ENCODE measurements at regions of chr17 and their contacts with region 1.

Region 1: GRCh38 chr17:64975329-64976087 is 56.2 kb upstream of the LRRC37A3 start:
- DNase-seq: peak; percentile 100
- H3K4me3 Mint-ChIP-seq: peak overlapping the region; percentile 76
- H3K27ac Mint-ChIP-seq: peak overlapping the region; percentile 93
- H3K4me1 Mint-ChIP-seq: peaks cover 47% of the 10 kb centered on the region
- H3K27me3 Mint-ChIP-seq: no peaks in the 10 kb centered on the region

Region 2: DNA sequence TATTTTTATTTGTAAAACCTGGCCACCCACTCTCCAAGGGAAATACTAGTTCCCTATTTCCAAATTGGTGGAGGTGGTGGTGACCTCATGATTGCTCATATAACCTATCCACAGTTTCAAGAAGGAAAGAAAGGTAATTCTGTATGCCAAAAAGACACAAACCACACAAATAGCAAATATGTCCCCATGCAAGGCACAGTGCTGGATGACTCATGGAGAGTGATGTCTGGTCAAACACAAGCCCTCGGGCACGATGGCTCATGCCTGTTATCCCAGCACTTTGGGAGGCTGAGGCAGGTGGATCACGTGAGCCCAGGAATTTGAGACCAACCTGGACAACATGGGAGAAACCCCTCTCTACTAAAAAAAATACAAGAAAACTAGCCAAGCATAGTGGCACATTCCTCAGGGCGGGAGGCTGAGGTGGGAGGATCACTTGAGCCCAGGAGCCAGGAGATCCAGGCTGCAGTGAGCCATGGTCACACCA is 16.9 kb after region 1 on chr17:
- intact Hi-C with region 1: loop called (anchors 2 kb)
- DNase-seq: no peak
- H3K4me3 Mint-ChIP-seq: peak overlapping the region; percentile 9
- H3K27ac Mint-ChIP-seq: peak overlapping the region; percentile 70
- H3K4me1 Mint-ChIP-seq: peaks cover 32% of the 10 kb centered on the region
- H3K27me3 Mint-ChIP-seq: peaks cover 2% of the 10 kb centered on the region

Region 3: DNA sequence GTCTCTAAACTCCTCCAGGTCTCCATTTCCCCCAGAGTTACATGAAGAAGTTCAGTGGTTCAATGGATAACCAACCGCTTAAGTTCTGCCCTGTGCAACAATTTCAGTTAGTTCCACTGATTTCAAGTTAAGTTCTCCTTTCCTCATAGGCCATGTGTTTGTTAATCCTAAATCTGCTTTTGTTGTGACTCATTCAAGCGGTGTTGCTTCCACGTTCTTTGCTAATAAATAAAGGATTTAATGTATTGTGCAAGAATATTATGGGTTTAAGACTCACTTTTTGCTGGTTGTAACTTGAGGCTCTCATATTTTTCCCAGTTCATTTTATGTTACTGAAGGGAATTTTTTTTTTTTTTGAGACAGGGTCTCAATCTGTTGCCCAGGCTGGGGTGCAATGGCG is 44.8 kb after region 1 on chr17:
- intact Hi-C with region 1: no loop called
- DNase-seq: no peak
- H3K4me3 Mint-ChIP-seq: no peak overlapping the region
- H3K27ac Mint-ChIP-seq: no peak overlapping the region
- H3K4me1 Mint-ChIP-seq: peaks cover 48% of the 10 kb centered on the region
- H3K27me3 Mint-ChIP-seq: no peaks in the 10 kb centered on the region

Region 4: DNA sequence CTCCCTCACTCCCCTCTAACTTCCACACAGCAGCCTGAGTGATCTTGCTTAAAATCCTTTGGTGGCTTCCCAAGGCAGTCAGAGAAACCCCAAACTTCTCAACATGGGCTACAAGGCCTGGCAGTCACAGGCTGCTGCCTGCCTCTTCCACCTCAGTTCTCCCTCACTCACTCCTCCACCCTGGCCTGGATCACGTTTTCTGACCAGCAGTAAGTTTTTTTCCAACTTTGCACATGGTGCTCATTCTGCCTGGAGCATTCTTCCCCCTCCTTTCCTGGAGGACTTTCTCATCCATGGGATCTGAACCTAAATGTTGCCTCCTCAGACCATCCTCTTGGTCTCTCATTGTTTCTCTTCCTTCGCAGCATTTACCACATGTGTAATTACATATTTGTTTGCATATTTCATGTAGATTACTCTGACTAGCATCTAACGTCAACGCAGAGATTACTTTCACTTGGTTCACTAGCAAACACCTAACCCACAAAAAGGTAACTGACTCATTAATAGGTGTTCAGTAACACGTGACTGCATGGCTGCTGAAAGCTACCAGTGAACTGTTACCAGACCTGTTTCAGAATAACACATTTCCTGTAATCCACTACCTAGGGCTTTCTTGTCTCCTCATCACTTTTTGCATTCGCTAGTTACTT is 64.0 kb after region 1 on chr17:
- intact Hi-C with region 1: loop called (anchors 2 kb)
- DNase-seq: peak; percentile 85
- H3K4me3 Mint-ChIP-seq: peak overlapping the region; percentile 68
- H3K27ac Mint-ChIP-seq: peak overlapping the region; percentile 79
- H3K4me1 Mint-ChIP-seq: peaks cover 66% of the 10 kb centered on the region
- H3K27me3 Mint-ChIP-seq: no peaks in the 10 kb centered on the region

Region 5: GRCh38 chr17:65122836-65123756 is 147.6 kb after region 1 on chr17:
- intact Hi-C with region 1: loop called (anchors 2 kb)
- DNase-seq: peak; percentile 96
- H3K4me3 Mint-ChIP-seq: peak overlapping the region; percentile 86
- H3K27ac Mint-ChIP-seq: peak overlapping the region; percentile 97
- H3K4me1 Mint-ChIP-seq: peaks cover 22% of the 10 kb centered on the region
- H3K27me3 Mint-ChIP-seq: peaks cover 12% of the 10 kb centered on the region

Region 6: DNA sequence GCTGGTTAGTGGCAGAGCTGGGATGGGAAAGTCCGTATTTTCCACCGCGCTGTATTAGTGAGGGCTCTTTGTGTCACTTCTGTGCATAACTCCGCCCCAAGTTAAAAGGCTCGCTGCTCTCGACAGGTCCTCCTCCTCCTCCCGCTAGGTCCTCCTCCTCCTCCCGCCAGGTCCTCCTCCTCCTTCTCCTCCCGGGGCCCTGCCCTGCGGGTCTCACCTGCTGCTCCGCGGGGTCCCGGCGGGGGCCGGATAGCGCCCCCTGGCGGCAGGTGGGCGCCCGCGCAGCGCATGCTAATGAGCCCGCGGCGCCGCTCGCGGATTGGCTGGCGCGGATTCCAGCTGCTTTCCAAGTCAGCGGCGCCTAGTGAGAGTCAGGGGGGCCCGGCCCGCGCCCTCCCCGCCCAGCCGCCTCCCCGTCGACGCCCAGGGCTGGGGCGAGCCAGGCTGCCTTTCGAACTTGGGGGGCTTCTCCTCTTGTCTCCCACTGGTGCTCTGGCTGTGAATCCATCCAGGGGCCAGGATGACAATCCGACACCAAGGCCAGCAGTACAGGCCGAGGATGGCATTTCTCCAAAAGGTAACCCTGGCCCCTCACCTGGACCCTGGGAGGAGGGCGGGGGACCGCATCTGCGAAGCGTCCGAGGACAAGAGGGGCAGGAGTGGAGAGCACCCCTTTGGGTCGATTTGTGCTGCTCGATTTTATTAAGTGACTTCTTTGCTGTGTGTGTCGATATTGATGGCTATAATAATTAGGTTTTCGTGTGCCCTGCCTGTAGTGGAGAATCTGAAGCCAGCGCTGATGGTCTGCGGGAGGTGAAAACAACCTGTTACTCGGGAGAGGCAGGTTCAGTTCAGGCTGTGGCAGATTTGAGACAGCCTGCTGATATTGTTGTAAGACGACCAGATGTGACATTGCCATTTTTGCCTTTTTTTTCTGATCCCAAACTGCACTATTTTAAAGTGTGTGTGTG is 161.8 kb after region 1 on chr17 and contains the start of gene RGS9:
- intact Hi-C with region 1: no loop called
- DNase-seq: peak; percentile 97
- H3K4me3 Mint-ChIP-seq: peak within 1 kb of the TSS; percentile 80
- H3K27ac Mint-ChIP-seq: peak within 1 kb of the TSS; percentile 50
- H3K4me1 Mint-ChIP-seq: peaks cover 31% of the 10 kb centered on the region
- H3K27me3 Mint-ChIP-seq: peaks cover 15% of the 10 kb centered on the region
- total RNA-seq, gene RGS9: 2.2 and 3.1 TPM in 2 replicates

Region 7: DNA sequence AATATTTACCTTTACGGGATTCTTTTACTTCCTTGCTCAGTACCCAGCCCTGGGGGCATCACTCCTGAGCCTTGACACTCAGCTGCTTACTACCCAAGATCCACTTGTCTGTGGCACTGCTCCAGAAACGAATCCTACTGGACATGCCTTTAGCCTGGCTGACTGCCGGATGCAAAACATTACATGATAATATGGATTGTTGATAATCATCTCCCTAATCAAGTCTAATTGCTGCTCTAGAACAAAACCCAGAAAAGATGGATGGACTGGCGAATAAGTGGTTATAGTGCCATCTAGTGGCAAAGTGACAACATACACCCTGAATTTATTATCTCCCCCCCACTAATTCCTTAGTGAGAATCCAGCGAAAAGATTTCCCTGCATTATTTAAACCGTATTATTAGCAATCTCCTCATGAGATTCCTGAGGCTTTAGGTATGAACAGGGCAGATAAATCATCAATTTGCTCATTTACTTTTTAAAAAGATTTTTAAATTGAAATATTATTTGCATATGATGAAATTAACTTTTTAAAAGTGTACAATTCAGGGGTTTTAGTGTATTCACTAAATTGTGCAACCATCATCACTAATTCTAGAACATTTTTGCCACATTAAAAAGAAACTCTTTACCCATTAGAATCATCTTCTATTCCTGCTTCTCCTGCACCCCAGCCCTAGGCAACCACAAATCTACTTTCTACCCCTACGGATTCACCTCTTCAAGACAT is 223.3 kb after region 1 on chr17:
- intact Hi-C with region 1: no loop called
- DNase-seq: peak; percentile 75
- H3K4me3 Mint-ChIP-seq: no peak overlapping the region
- H3K27ac Mint-ChIP-seq: no peak overlapping the region
- H3K4me1 Mint-ChIP-seq: peaks cover 24% of the 10 kb centered on the region
- H3K27me3 Mint-ChIP-seq: peaks cover 8% of the 10 kb centered on the region

Region 8: GRCh38 chr17:65547253-65547670 is 571.8 kb after region 1 on chr17:
- intact Hi-C with region 1: no loop called
- DNase-seq: no peak
- H3K4me3 Mint-ChIP-seq: no peak overlapping the region
- H3K27ac Mint-ChIP-seq: no peak overlapping the region
- H3K4me1 Mint-ChIP-seq: peaks cover 8% of the 10 kb centered on the region
- H3K27me3 Mint-ChIP-seq: peaks cover 10% of the 10 kb centered on the region

Measured in activated CD4-positive, alpha-beta T cell treated with anti-CD3 and anti-CD28 coated beads, Interleukin-2, amount 10 ng/mL, durations not matched to agents 24 days and 14 days (primary cell).